ENCODE measurements at regions of chr20 and their contacts with region 1.

Region 1: GRCh38 chr20:10970109-10970508 is 296.3 kb upstream of the JAG1 start:
- DNase-seq: no peak
- ATAC-seq: no peak

Region 2: GRCh38 chr20:11012975-11013374 is 42.9 kb after region 1 on chr20:
- intact Hi-C with region 1: loop called (anchors 5 kb)
- DNase-seq: no peak
- ATAC-seq: peak; percentile 86

Region 3: GRCh38 chr20:11140359-11140758 is 170.2 kb after region 1 on chr20:
- intact Hi-C with region 1: no loop called
- DNase-seq: no peak
- ATAC-seq: peak; percentile 39

Region 4: DNA sequence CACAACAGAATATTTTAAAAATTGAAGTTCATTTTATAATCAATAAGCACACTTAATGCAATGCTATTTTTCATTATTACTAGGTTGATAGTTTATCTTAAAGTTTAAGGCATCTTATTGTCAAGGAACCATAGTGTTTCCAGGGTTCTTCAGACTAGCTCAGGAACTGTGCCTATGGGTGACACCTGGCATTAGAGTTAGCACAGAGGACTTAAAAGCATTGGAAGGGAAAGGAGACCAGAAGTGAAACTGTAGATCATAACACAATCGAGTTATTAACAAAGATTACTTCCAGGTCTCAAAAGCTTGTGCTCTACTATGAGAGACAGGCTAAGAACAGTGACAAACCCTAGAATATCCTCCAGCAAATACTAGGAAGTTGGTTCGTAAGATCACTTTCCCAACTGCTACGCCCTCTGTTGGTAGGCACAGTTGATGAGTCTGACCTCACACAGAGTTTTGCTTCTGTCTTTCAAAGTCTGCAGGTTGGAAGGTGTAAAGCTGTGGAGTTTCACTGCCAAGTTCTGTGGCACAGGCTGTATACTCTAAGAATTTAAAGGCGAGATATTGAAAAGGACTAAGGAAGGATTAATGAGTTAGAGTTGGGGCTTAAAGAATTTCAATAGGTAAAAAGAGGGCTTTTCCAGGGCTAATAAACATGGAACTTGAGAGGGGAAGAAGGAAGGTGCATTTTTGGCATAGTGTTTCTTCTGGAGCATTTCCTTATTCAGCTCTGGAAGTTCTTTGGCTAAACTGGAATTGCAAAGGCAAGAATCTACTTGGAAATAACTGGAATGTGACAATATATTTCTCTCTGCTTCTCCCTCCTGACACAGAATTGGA is 235.0 kb after region 1 on chr20:
- intact Hi-C with region 1: loop called (anchors 10 kb)
- DNase-seq: no peak
- ATAC-seq: peak; percentile 89

Measured in Right ventricle myocardium inferior (tissue), 1 donor.